Psoas muscle (tissue), 8 donors: ENCODE measurements at regions of chr20 and their contacts with region 1.

Region 1: DNA sequence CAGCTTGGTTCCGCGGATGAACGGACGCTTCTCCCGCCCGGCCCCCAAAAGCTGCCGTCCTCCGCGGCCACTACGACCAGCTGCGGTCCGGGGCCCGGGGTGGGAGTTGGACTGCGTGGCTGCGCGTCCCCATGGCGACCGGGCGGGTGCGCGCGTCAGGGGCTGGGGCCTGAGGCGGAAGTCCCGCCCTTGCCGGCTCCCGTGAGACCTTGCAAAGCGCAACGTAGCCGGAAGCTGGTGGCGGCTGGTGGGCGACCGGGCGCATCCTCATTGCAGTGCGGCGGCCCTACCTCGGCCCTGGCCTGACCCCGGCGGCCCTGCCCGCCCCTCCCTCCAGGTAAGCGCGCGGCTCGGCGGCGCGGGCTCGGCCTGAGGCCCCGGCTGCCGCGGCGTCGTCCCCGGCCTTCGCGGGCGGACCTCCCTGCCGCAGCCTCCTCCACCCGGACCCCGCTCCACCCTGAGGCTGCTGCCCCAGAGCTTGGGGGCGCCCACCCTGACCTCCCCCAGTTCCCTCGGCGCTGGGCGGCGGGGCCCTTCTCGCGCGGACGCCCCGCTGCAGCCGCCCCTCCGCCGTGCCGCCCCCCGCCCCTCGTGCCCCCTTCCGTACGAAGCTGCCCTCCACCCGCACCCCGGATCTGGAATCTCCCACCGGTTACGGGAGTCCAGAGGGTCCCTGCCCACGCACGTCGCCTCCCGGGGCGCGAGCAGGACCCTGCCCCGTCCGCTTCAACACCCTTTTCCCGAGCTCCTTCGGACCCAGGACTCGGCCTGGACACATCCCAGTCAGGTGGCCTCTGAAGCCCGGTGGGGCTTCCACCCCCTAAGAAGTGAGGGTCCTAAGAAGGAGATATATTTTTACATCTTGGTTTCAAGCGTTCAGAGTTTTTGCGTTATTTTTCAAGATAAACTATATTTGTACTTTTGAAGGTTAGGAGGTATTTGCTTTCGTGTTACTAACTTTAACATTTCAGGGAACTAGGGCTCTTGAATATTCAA is at the start of gene ARFGAP1:
- DNase-seq: peak; percentile 93 to 96
- ATAC-seq: peak; percentile 96 to 100 (median 98)
- H3K4me3 ChIP-seq: peak within 1 kb of the TSS; percentile 86
- H3K27ac ChIP-seq: peak within 1 kb of the TSS; percentile 60
- H3K4me1 ChIP-seq: peaks cover 20% of the 10 kb centered on the region
- H3K27me3 ChIP-seq: peaks cover 0 to 20% (median 2%) of the 10 kb centered on the region in 3 donors
- CTCF ChIP-seq: no peak
- total RNA-seq, gene ARFGAP1: 19.9 to 42.2 (median 25.5) TPM

Region 2: DNA sequence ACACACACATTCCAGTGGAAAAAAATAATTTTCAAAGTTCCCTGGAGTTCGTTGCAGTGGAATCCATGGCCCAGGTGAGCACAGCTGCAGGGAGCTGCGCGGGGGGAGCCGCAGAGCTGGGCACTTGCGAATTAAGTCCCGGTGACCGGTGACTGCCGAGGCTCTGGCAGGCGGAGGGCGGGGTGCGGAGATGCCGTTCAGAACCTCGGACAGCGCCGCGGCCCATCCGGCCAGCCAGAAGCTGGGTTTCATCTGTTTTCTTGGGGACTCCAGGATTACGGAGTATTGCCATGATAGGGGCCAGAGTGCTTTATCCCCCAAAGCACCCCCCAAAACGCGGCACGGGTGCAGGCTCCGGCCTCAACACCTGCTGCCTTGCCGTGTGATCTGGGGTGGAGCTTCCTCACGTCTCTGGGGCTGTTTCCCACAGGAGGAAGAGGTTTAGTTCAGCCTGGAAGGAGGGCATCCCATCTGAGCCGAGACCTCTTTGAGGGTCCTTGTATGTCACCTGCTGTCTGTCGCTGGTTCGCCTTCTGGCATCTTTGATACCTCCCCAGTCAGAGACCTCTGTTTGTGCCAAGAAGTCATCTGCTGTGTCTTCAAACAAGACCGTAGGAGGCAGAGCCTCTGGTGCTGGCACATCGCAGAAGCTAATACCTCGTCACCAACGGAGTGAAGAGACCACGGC is 156.3 kb before region 1 on chr20:
- intact Hi-C with region 1: no loop called
- DNase-seq: peak in 1 of 2 donors; percentile 36
- ATAC-seq: no peak
- H3K4me3 ChIP-seq: no peak overlapping the region
- H3K27ac ChIP-seq: no peak overlapping the region
- H3K4me1 ChIP-seq: no peaks in the 10 kb centered on the region
- H3K27me3 ChIP-seq: peaks cover 0 to 55% (median 15%) of the 10 kb centered on the region in 3 donors
- CTCF ChIP-seq: no peak

Region 3: GRCh38 chr20:63210011-63210605 is 62.8 kb before region 1 on chr20:
- intact Hi-C with region 1: loop called in 1 of 2 experiments (anchors 5 kb)
- DNase-seq: no peak
- ATAC-seq: no peak
- H3K4me3 ChIP-seq: no peak overlapping the region
- H3K27ac ChIP-seq: no peak overlapping the region
- H3K4me1 ChIP-seq: peaks cover 62% of the 10 kb centered on the region
- H3K27me3 ChIP-seq: no peaks in the 10 kb centered on the region
- CTCF ChIP-seq: no peak